PC-9 (cell line): ENCODE measurements at regions of chr10 and their contacts with region 1.

Region 1: GRCh38 chr10:74451127-74451829 is 300.3 kb downstream of the ADK start:
- DNase-seq: no peak
- H3K4me3 ChIP-seq: no peak overlapping the region
- H3K27ac ChIP-seq: no peak overlapping the region
- H3K4me1 ChIP-seq: no peaks in the 10 kb centered on the region
- H3K27me3 ChIP-seq: no peaks in the 10 kb centered on the region
- CTCF ChIP-seq: no peak

Region 2: GRCh38 chr10:74437822-74438221 is 13.5 kb before region 1 on chr10:
- CTCF ChIA-PET with region 1: no interaction called
- POLR2A ChIA-PET with region 1: no interaction called
- intact Hi-C with region 1: no loop called
- DNase-seq: no peak
- H3K4me3 ChIP-seq: no peak overlapping the region
- H3K27ac ChIP-seq: no peak overlapping the region
- H3K4me1 ChIP-seq: no peaks in the 10 kb centered on the region
- H3K27me3 ChIP-seq: no peaks in the 10 kb centered on the region
- CTCF ChIP-seq: no peak

Region 3: GRCh38 chr10:74488907-74489306 is 37.6 kb after region 1 on chr10:
- CTCF ChIA-PET with region 1: no interaction called
- POLR2A ChIA-PET with region 1: interaction called, 22 read pairs
- intact Hi-C with region 1: no loop called
- DNase-seq: no peak
- H3K4me3 ChIP-seq: no peak overlapping the region
- H3K27ac ChIP-seq: no peak overlapping the region
- H3K4me1 ChIP-seq: no peaks in the 10 kb centered on the region
- H3K27me3 ChIP-seq: no peaks in the 10 kb centered on the region
- CTCF ChIP-seq: no peak

Region 4: GRCh38 chr10:74754381-74754821 is 303.1 kb after region 1 on chr10:
- CTCF ChIA-PET with region 1: no interaction called
- POLR2A ChIA-PET with region 1: interaction called, 25 read pairs
- intact Hi-C with region 1: no loop called
- DNase-seq: no peak
- H3K4me3 ChIP-seq: no peak overlapping the region
- H3K27ac ChIP-seq: no peak overlapping the region
- H3K4me1 ChIP-seq: no peaks in the 10 kb centered on the region
- H3K27me3 ChIP-seq: no peaks in the 10 kb centered on the region
- CTCF ChIP-seq: no peak

Region 5: DNA sequence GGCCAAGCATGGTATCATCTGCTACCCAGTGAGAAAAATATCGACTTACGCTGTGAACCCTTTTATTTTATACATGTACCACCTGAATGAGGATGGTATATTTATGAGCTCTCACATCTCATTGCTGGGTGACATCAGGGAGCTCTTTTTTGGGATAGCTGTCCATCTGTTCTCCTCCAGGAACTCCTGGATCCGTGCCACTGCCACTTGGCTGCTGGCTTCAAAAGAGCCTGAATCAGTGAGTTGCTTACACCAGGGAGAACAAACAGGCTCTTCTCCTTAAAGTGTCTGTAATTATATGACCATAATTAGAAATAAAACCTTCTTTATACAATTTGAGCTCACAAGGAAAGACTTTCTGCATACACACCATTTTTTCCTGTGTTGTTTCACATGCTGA is 481.4 kb after region 1 on chr10:
- CTCF ChIA-PET with region 1: no interaction called
- POLR2A ChIA-PET with region 1: interaction called, 20 read pairs
- intact Hi-C with region 1: no loop called
- DNase-seq: no peak
- H3K4me3 ChIP-seq: no peak overlapping the region
- H3K27ac ChIP-seq: no peak overlapping the region
- H3K4me1 ChIP-seq: peaks cover 16% of the 10 kb centered on the region
- H3K27me3 ChIP-seq: no peaks in the 10 kb centered on the region
- CTCF ChIP-seq: no peak